Mammary epithelial cell (primary cell): ENCODE measurements at regions of chr1 and their contacts with region 1.

Region 1: DNA sequence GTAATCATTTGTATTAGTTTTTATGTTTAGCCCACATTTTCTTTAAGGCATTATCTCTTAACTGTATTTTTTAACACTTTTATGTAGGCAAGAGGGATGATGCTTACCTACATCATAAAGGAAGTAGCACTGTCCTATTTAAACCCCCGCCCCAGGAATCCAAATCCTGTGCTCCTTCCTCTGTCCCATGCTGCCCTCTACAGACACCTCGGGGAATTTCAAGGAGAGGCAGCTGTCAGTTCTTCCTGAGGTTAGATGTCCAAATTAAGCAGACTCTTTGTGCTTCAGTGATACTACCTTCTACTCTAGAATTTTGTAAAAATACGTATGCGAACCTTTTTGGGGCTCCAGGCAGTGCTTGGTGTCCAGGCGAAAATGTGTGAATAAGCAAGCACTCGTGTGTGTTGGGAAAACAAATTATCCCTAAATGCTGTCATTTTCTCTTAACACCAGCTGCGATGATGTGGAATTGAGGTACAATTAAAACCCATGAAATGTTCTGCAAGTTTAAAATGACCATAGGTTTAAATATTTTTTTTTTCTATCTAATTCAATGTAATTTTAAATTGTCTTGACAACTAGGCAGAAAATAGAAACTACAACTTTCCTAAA is 19.2 kb downstream of the CRCT1 start:
- DNase-seq: peak; percentile 50
- H3K4me3 ChIP-seq: no peak overlapping the region
- H3K27ac ChIP-seq: no peak overlapping the region
- H3K4me1 ChIP-seq: no peaks in the 10 kb centered on the region
- H3K27me3 ChIP-seq: no peaks in the 10 kb centered on the region
- CTCF ChIP-seq: peak; percentile 90 to 94

Region 2: DNA sequence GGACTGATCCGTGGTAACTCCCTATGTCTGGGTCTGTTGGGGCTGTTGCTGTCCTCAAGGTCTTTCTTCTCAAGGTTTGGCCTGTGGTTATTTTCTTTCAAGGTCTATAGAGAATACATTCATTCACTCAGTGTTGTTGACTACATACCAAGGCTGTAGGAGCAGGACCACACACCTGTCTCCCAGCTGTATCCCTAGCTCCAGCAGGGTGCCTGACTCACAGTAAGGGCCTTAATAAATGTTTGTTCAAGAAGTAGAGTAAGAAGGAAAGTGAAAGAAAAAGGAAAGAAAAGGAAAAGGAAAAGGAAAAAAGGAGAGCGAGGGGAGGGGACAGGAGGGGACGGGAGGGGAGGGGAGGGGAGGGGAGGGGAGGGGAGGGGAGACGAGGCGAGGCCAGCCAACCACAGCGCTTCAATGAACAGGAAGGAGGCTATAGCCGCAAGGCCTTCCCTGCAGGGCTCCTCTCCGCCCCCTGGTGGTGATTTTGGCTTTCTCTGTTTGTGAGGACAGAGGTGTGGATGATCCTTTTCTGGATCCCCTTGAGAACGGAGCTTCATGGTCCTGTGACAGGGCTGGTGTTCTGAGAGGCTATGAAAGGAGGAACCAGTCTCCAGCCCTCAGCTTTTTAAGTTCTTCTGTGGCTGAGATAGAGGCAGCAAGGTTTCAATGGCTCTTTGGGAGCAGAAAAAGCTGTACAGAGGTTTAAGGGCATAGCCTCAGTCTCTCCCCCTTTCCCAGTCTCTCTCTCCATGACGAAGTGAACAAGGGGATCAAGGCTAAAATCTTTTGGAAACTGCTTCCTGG is 53.4 kb before region 1 on chr1:
- CTCF ChIA-PET with region 1: no interaction called
- dilution Hi-C with region 1: no loop called
- in situ Hi-C with region 1: loop called in 1 of 2 experiments (anchors 10 kb)
- intact Hi-C with region 1: no loop called
- DNase-seq: no peak
- H3K4me3 ChIP-seq: no peak overlapping the region
- H3K27ac ChIP-seq: no peak overlapping the region
- H3K4me1 ChIP-seq: no peaks in the 10 kb centered on the region
- H3K27me3 ChIP-seq: no peaks in the 10 kb centered on the region
- CTCF ChIP-seq: peak; percentile 57 to 60

Region 3: GRCh38 chr1:152486400-152487006 is 46.9 kb before region 1 on chr1:
- CTCF ChIA-PET with region 1: no interaction called
- dilution Hi-C with region 1: no loop called
- in situ Hi-C with region 1: loop called in 1 of 2 experiments (anchors 10 kb)
- intact Hi-C with region 1: loop called (anchors 2 kb)
- DNase-seq: no peak
- H3K4me3 ChIP-seq: no peak overlapping the region
- H3K27ac ChIP-seq: no peak overlapping the region
- H3K4me1 ChIP-seq: peaks cover 16% of the 10 kb centered on the region
- H3K27me3 ChIP-seq: no peaks in the 10 kb centered on the region
- CTCF ChIP-seq: peak; percentile 34 to 58

Region 4: DNA sequence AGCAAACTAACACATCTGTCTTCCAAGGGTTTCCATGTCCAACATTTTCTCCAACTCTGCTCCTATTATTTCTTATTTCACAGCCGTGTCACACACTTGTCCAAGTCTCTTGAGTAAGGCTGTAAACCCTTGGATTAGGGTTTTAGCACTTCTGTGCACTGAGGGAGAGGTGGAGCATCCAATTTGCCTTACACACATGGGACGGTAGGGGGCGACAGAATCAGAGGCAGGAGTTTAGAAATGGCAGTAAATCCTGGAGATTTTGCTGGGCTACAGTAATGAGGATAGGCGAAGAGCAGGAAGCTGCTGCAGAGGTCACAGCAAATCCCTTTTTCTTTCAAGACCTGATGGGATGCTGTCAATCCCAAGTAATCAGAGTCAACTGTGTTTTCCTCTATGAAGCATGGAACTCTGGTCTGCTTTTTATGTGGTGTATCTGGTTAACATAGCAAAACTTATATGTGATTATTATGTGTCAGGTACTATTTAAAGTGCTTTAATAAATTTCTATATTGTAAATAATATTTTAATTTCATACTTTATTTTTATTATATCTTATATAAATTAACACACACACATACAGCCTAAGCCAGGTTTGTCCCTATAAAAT is 38.3 kb before region 1 on chr1:
- CTCF ChIA-PET with region 1: no interaction called
- dilution Hi-C with region 1: no loop called
- in situ Hi-C with region 1: no loop called
- intact Hi-C with region 1: loop called (anchors 1 kb)
- DNase-seq: no peak
- H3K4me3 ChIP-seq: no peak overlapping the region
- H3K27ac ChIP-seq: no peak overlapping the region
- H3K4me1 ChIP-seq: no peaks in the 10 kb centered on the region
- H3K27me3 ChIP-seq: no peaks in the 10 kb centered on the region
- CTCF ChIP-seq: peak; percentile 91 to 93

Region 5: DNA sequence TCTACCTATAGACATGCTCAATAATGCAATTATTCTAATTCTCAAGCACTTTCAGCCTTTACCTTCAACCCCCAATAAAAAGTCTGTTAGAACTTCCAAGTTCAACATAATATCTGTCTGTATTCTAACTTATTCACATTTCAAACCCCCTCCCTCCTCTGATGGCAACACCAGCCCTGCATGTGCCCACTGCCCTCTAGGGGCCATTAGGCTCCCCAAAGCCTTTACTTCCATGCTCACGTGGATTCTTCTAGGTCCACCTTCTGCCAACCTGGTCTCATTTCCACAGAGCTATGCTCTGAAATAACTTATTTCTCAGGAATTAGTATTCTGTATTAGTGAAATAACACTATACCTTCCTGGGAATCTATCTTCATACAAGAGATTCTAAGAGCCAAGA is 202.2 kb after region 1 on chr1:
- CTCF ChIA-PET with region 1: no interaction called
- dilution Hi-C with region 1: no loop called
- in situ Hi-C with region 1: no loop called
- intact Hi-C with region 1: loop called (anchors 5 kb)
- DNase-seq: no peak
- H3K4me3 ChIP-seq: no peak overlapping the region
- H3K27ac ChIP-seq: no peak overlapping the region
- H3K4me1 ChIP-seq: peaks cover 22% of the 10 kb centered on the region
- H3K27me3 ChIP-seq: no peaks in the 10 kb centered on the region
- CTCF ChIP-seq: peak; percentile 68 to 82